ENCODE measurements at regions of chr2 and their contacts with region 1.

Region 1: GRCh38 chr2:210833403-210833802 is 277.0 kb downstream of the CPS1 start:
- DNase-seq: no peak
- ATAC-seq: peak; percentile 46
- H3K4me3 ChIP-seq: no peak overlapping the region
- H3K27ac ChIP-seq: no peak overlapping the region
- H3K4me1 ChIP-seq: no peaks in the 10 kb centered on the region
- H3K27me3 ChIP-seq: no peaks in the 10 kb centered on the region

Region 2: DNA sequence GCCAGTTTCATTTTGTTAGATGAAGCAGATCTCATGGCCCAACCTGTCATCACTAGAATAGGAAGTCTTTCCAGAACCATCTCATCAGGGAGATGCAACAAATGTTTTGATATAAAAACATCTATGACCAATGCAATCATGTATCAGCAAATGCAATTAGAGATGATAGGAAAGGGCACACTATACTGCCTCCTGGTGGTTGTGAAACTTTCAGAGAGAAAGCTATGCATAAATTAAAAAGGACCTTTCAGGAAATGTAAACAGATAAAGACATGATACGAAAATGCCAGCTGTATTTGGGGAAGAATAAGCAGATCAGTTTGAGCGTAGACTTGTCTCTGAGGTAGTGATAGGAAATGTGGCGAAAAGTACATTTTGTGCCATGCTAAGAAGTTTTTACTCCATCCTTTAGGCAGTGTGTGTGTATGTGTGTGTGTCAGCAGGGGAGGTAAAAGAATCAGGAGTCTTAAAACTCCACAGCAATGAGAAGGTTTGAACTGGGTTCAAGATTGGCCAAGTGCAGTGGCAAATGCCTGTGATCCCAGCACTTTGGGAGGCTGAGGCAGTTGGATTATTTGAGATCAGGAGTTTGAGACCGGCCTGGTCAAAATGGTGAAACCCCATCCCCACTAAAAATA is 202.3 kb after region 1 on chr2:
- intact Hi-C with region 1: loop called in 1 of 2 experiments (anchors 5 kb)
- DNase-seq: no peak
- ATAC-seq: peak; percentile 36
- H3K4me3 ChIP-seq: no peak overlapping the region
- H3K27ac ChIP-seq: no peak overlapping the region
- H3K4me1 ChIP-seq: no peaks in the 10 kb centered on the region
- H3K27me3 ChIP-seq: no peaks in the 10 kb centered on the region

Region 3: DNA sequence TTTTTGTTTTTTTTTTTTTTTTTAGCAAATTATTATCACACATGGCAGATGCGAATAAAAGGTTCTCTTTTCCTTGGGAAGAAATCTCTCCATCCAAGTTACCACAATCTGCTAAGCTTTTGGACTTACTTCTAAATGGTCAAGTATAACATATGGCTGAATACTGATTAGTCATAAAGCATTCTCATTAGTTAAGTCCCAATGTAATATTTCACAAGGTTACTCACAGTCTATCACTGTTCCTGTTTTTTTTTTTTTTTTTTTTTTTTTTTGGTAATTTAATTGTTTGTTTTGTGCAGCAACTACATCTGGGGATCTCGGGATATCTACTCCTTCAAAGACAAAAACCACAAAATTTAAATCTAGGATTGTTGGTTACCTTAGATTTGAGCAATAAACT is 494.7 kb after region 1 on chr2:
- intact Hi-C with region 1: no loop called
- DNase-seq: no peak
- ATAC-seq: no peak
- H3K4me3 ChIP-seq: no peak overlapping the region
- H3K27ac ChIP-seq: no peak overlapping the region
- H3K4me1 ChIP-seq: no peaks in the 10 kb centered on the region
- H3K27me3 ChIP-seq: no peaks in the 10 kb centered on the region